ENCODE measurements at regions of chrX and their contacts with region 1.

Region 1: GRCh38 chrX:154051201-154051810 is 31.6 kb upstream of the IRAK1 start:
- DNase-seq: peak; percentile 35
- H3K4me3 ChIP-seq: no peak overlapping the region
- H3K27ac ChIP-seq: no peak overlapping the region
- H3K4me1 ChIP-seq: no peaks in the 10 kb centered on the region
- H3K27me3 ChIP-seq: no peaks in the 10 kb centered on the region
- CTCF ChIP-seq: peak; percentile 67 to 73

Region 2: DNA sequence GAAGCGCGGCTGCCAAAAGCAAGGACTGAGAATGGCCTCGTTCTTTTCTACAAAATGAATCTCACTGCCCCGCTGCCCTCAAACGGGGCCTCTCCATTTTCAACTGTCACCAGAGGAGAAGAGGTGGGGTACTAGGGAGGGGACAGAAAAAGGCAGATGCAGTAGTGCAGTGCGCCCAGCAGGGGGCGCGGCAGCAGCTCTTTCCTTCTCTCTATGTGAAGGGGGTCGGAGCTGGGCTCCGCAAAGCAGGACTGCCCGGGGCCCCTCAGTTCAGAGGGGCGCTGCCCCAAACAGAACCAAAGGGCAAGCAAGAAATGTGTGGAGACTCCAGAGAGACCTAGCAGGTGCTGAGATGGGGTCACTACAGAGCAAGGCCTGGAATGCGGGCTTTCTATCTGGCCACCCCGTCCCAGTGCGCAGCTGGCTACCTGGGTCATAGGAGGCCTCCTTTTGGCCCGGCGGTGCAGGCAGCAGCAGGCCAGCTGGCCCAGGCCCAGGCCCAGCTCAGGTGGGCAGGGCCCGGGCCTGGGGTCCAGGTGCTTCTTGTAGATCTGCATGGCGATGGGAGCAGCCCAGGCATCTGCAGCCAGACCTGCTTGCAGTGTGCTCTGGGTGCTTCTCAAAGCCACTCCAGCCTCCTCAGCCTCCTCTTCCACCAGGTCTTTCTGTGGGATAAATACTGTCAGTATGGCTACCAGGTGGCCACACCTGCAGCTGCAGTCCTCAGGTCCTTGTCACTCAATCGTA is 37.5 kb before region 1 on chrX:
- CTCF ChIA-PET with region 1: no interaction called
- dilution Hi-C with region 1: no loop called
- in situ Hi-C with region 1: no loop called
- intact Hi-C with region 1: loop called (anchors 1 kb)
- DNase-seq: no peak
- H3K4me3 ChIP-seq: no peak overlapping the region
- H3K27ac ChIP-seq: no peak overlapping the region
- H3K4me1 ChIP-seq: peaks cover 29% of the 10 kb centered on the region
- H3K27me3 ChIP-seq: no peaks in the 10 kb centered on the region
- CTCF ChIP-seq: peak; percentile 59 to 71

Measured in mammary epithelial cell (primary cell).